Right cardiac atrium (tissue), 5 donors: ENCODE measurements at regions of chr20 and their contacts with region 1.

Region 1: GRCh38 chr20:41095110-41095969 is 42.0 kb upstream of the PLCG1 start:
- DNase-seq: peak; percentile 46 to 75 (median 67)
- ATAC-seq: peak; percentile 67 to 80
- H3K4me3 ChIP-seq: no peak overlapping the region
- H3K27ac ChIP-seq: no peak overlapping the region
- H3K4me1 ChIP-seq: no peaks in the 10 kb centered on the region
- H3K27me3 ChIP-seq: no peaks in the 10 kb centered on the region

Region 2: GRCh38 chr20:40970201-40970600 is 125.1 kb before region 1 on chr20:
- intact Hi-C with region 1: loop called in 3 of 4 experiments (anchors 5 kb)
- DNase-seq: no peak
- ATAC-seq: no peak
- H3K4me3 ChIP-seq: no peak overlapping the region
- H3K27ac ChIP-seq: no peak overlapping the region
- H3K4me1 ChIP-seq: no peaks in the 10 kb centered on the region
- H3K27me3 ChIP-seq: no peaks in the 10 kb centered on the region